ENCODE measurements at regions of chr10 and their contacts with region 1.

Region 1: DNA sequence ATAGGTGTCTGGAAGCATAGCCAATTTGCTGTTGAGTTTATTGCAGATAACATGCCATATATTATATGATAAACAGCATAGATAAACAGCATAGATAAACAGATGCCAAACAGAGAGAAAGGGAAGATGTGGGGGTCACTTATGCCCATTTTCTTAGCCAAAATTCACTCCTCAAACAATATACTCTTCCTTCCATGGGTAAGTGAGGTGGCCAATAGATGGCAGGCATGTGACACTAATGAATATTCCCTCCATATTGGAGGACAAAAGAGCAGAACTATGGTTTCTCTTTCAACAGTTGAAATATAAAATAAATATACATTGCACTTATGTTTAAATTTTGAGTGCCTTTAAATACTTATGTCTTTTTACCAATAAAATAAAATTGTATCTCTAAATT is 1212.8 kb downstream of the REEP3 start:
- DNase-seq: peak; percentile 86
- ATAC-seq: peak; percentile 84
- H3K4me3 ChIP-seq: no peak overlapping the region
- H3K27ac ChIP-seq: no peak overlapping the region
- H3K4me1 ChIP-seq: peaks cover 11% of the 10 kb centered on the region
- H3K27me3 ChIP-seq: no peaks in the 10 kb centered on the region
- CTCF ChIP-seq: peak; percentile 91

Region 2: GRCh38 chr10:64091897-64092296 is 642.1 kb before region 1 on chr10:
- CTCF ChIA-PET with region 1: no interaction called
- POLR2A ChIA-PET with region 1: interaction called, 10 read pairs
- intact Hi-C with region 1: no loop called
- DNase-seq: peak; percentile 72
- ATAC-seq: peak; percentile 40
- H3K4me3 ChIP-seq: no peak overlapping the region
- H3K27ac ChIP-seq: no peak overlapping the region
- H3K4me1 ChIP-seq: peaks cover 35% of the 10 kb centered on the region
- H3K27me3 ChIP-seq: no peaks in the 10 kb centered on the region
- CTCF ChIP-seq: peak; percentile 86

Region 3: GRCh38 chr10:64508029-64508661 is 225.8 kb before region 1 on chr10:
- CTCF ChIA-PET with region 1: no interaction called
- POLR2A ChIA-PET with region 1: no interaction called
- intact Hi-C with region 1: loop called (anchors 1 kb)
- DNase-seq: no peak
- ATAC-seq: no peak
- H3K4me3 ChIP-seq: no peak overlapping the region
- H3K27ac ChIP-seq: no peak overlapping the region
- H3K4me1 ChIP-seq: peaks cover 15% of the 10 kb centered on the region
- H3K27me3 ChIP-seq: no peaks in the 10 kb centered on the region
- CTCF ChIP-seq: no peak

Region 4: GRCh38 chr10:64952042-64952441 is 218.1 kb after region 1 on chr10:
- CTCF ChIA-PET with region 1: no interaction called
- POLR2A ChIA-PET with region 1: no interaction called
- intact Hi-C with region 1: no loop called
- DNase-seq: peak; percentile 74
- ATAC-seq: peak; percentile 100
- H3K4me3 ChIP-seq: no peak overlapping the region
- H3K27ac ChIP-seq: no peak overlapping the region
- H3K4me1 ChIP-seq: no peaks in the 10 kb centered on the region; the same call in 1 of the 2 replicates
- H3K27me3 ChIP-seq: no peaks in the 10 kb centered on the region
- CTCF ChIP-seq: no peak

Region 5: GRCh38 chr10:65065278-65065677 is 331.3 kb after region 1 on chr10:
- CTCF ChIA-PET with region 1: no interaction called
- POLR2A ChIA-PET with region 1: no interaction called
- intact Hi-C with region 1: loop called (anchors 1 kb)
- DNase-seq: no peak
- ATAC-seq: no peak
- H3K4me3 ChIP-seq: no peak overlapping the region
- H3K27ac ChIP-seq: no peak overlapping the region
- H3K4me1 ChIP-seq: no peaks in the 10 kb centered on the region
- H3K27me3 ChIP-seq: no peaks in the 10 kb centered on the region
- CTCF ChIP-seq: 0 out of 2 replicates have a peak, but pooled peaks have one; percentile 20

Region 6: DNA sequence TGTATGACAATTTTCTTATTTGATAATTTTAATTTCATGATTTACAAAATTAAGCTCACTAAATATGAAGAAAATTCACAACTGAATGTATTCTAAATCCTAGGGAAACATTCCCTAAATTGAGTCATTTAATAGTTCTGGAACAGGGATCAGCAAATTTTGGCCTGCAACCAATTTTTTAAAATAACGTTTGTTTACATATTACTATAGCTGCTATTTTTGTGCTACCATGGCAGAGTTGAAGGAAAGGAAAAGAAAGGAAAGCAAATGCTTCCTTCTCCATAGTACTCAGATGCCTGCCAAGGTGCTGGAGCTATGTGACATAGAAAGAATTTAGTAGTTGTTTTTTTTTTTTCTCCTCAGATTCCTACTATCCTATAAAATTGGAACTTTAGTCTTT is 884.1 kb after region 1 on chr10:
- CTCF ChIA-PET with region 1: no interaction called
- POLR2A ChIA-PET with region 1: no interaction called
- intact Hi-C with region 1: loop called (anchors 2 kb)
- DNase-seq: peak; percentile 68
- ATAC-seq: peak; percentile 80
- H3K4me3 ChIP-seq: no peak overlapping the region
- H3K27ac ChIP-seq: no peak overlapping the region
- H3K4me1 ChIP-seq: peaks cover 3% of the 10 kb centered on the region; the same call in 1 of the 2 replicates
- H3K27me3 ChIP-seq: no peaks in the 10 kb centered on the region
- CTCF ChIP-seq: no peak

Region 7: DNA sequence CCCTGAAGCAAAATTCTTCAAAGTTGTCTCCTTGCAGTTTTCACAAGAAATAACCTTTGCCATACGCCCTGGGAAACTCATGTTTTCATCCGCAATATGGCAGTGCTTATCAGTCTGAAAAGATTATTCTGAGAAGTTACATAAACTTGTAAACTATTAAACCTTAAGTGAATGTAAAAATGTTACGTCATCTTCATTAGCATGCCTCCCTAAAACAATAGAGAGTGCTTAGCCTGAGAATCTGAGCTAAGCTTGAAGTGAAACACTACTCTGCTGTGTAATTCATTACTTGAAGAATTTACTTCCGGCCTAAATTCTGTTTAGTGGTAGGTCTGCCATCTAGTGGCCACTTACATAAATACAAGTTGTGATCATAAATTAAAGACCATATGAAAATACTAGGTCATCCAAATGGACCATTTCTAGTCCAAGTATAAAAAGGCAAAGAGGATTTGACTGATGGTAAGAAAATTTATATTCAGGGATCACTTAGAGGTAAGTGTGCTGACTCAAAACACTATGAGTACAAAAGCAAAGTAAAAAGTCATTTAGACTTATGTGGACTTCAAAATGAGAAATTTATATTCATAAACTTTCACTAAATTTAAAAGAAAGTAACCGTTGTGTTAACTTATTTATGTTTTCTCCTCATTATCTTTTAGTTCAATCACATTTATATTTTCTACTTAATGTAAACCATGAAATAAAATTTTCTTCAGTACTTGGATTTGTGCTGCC is 1446.8 kb after region 1 on chr10:
- CTCF ChIA-PET with region 1: no interaction called
- POLR2A ChIA-PET with region 1: no interaction called
- intact Hi-C with region 1: loop called (anchors 1 kb)
- DNase-seq: peak; percentile 93
- ATAC-seq: peak; percentile 74
- H3K4me3 ChIP-seq: no peak overlapping the region
- H3K27ac ChIP-seq: no peak overlapping the region
- H3K4me1 ChIP-seq: no peaks in the 10 kb centered on the region
- H3K27me3 ChIP-seq: no peaks in the 10 kb centered on the region
- CTCF ChIP-seq: peak; percentile 95

Measured in PC-3 (cell line).